ENCODE measurements at regions of chr3 and their contacts with region 1.

Region 1: DNA sequence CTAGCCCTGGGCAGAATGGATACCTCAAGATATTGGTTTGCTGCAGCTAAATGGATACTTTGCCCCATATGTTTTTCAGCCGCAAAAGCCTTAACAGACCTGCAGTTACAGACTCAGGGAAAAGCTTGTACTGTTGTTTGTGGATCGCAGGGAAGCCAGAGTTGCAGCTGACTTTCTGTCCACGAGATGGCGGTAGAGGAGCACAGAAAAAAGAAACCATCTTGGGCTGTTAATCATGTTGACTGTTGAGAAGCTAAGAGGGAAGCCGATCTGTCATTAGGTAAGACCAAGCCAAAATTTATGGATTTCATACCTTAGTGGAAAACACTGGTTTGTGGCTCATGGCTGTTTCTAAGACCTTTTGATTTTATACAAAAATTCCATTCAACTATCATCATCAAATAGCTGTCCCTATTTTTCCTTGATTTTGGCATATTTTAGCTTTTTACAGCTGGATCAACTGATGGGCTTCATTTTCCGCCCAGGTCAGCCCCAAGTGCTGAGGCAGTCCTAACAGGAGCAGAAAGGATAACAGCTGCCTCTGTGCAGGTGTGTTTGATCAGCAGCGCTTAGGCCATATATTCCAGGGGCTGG is 205.7 kb upstream of the ZPLD1 start:
- DNase-seq: peak; percentile 19 to 75
- ATAC-seq: peak; percentile 78 to 88
- H3K4me3 ChIP-seq: no peak overlapping the region
- H3K27ac ChIP-seq: no peak overlapping the region
- H3K4me1 ChIP-seq: peaks cover 8% of the 10 kb centered on the region
- CTCF ChIP-seq: peak; percentile 92
- EP300 ChIP-seq: no peak
- POLR2A ChIP-seq: no peak
- RAD21 ChIP-seq: peak; percentile 94 to 95

Region 2: GRCh38 chr3:101791778-101792177 is 437.4 kb before region 1 on chr3:
- CTCF ChIA-PET with region 1: interaction called, 14 read pairs
- POLR2A ChIA-PET with region 1: no interaction called
- DNase-seq: no peak
- ATAC-seq: no peak
- H3K4me3 ChIP-seq: no peak overlapping the region
- H3K27ac ChIP-seq: no peak overlapping the region
- H3K4me1 ChIP-seq: no peaks in the 10 kb centered on the region
- CTCF ChIP-seq: no peak
- EP300 ChIP-seq: no peak
- POLR2A ChIP-seq: no peak
- RAD21 ChIP-seq: no peak

Region 3: GRCh38 chr3:101819758-101820157 is 409.4 kb before region 1 on chr3:
- CTCF ChIA-PET with region 1: interaction called, 186 read pairs
- POLR2A ChIA-PET with region 1: interaction called, 3 read pairs
- DNase-seq: no peak
- ATAC-seq: no peak
- H3K4me3 ChIP-seq: no peak overlapping the region
- H3K27ac ChIP-seq: no peak overlapping the region
- H3K4me1 ChIP-seq: peaks cover 12% of the 10 kb centered on the region
- CTCF ChIP-seq: no peak
- EP300 ChIP-seq: no peak
- POLR2A ChIP-seq: no peak
- RAD21 ChIP-seq: no peak

Region 4: DNA sequence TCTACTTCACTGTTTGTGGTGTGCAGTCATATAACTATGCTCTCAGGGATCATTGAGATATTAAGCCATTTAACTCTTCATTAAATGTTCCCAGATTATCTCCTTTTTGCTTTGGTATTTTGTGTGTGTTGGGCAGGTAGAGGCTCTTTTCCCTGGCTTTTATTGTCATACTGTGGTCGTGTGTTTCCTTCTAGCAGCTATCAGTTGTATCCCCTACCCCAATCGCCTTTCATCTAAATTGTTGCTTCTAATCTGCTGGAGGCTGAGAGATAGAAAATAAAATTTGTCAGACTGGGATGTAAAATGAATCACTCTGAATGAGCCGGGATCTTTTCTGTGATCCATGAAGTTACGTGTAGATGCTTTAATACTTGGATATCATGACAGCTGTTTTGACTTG is 370.7 kb before region 1 on chr3:
- CTCF ChIA-PET with region 1: interaction called, 17 read pairs
- POLR2A ChIA-PET with region 1: interaction called, 5 read pairs
- DNase-seq: no peak
- ATAC-seq: no peak
- H3K4me3 ChIP-seq: no peak overlapping the region
- H3K27ac ChIP-seq: 0 out of 6 replicates have a peak overlapping the region, but pooled peaks of 1 of the 2 experiments have one; percentile 8
- H3K4me1 ChIP-seq: peaks cover 25% of the 10 kb centered on the region
- CTCF ChIP-seq: no peak
- EP300 ChIP-seq: no peak
- POLR2A ChIP-seq: no peak
- RAD21 ChIP-seq: no peak

Region 5: GRCh38 chr3:102180291-102181039 is 48.7 kb before region 1 on chr3:
- CTCF ChIA-PET with region 1: interaction called, 21 read pairs
- POLR2A ChIA-PET with region 1: no interaction called
- DNase-seq: peak in 1 of 2 experiments; percentile 81
- ATAC-seq: peak; percentile 62 to 74; a peak in 5 of 6 replicates
- H3K4me3 ChIP-seq: peak overlapping the region; percentile 26
- H3K27ac ChIP-seq: peak overlapping the region; percentile 77 to 85
- H3K4me1 ChIP-seq: peaks cover 60% of the 10 kb centered on the region
- CTCF ChIP-seq: no peak
- EP300 ChIP-seq: peak in 1 of 2 experiments; percentile 55; a peak in 1 of 5 replicates
- POLR2A ChIP-seq: no peak
- RAD21 ChIP-seq: no peak

Region 6: GRCh38 chr3:102488331-102488730 is 259.2 kb after region 1 on chr3:
- CTCF ChIA-PET with region 1: no interaction called
- POLR2A ChIA-PET with region 1: no interaction called
- DNase-seq: no peak
- ATAC-seq: no peak
- H3K4me3 ChIP-seq: no peak overlapping the region
- H3K27ac ChIP-seq: no peak overlapping the region
- H3K4me1 ChIP-seq: no peaks in the 10 kb centered on the region
- CTCF ChIP-seq: no peak
- EP300 ChIP-seq: no peak
- POLR2A ChIP-seq: no peak
- RAD21 ChIP-seq: no peak

Region 7: GRCh38 chr3:102673271-102674115 is 444.3 kb after region 1 on chr3:
- CTCF ChIA-PET with region 1: interaction called, 13 read pairs
- POLR2A ChIA-PET with region 1: no interaction called
- DNase-seq: peak; percentile 40 to 53
- ATAC-seq: peak; percentile 88 to 92
- H3K4me3 ChIP-seq: no peak overlapping the region
- H3K27ac ChIP-seq: no peak overlapping the region
- H3K4me1 ChIP-seq: no peaks in the 10 kb centered on the region
- CTCF ChIP-seq: peak; percentile 92
- EP300 ChIP-seq: no peak
- POLR2A ChIP-seq: no peak
- RAD21 ChIP-seq: peak; percentile 91 to 93

Region 8: GRCh38 chr3:102802819-102803420 is 573.8 kb after region 1 on chr3:
- CTCF ChIA-PET with region 1: no interaction called
- POLR2A ChIA-PET with region 1: no interaction called
- DNase-seq: no peak
- ATAC-seq: no peak
- H3K4me3 ChIP-seq: no peak overlapping the region
- H3K27ac ChIP-seq: no peak overlapping the region
- H3K4me1 ChIP-seq: no peaks in the 10 kb centered on the region
- CTCF ChIP-seq: no peak
- EP300 ChIP-seq: no peak
- POLR2A ChIP-seq: no peak
- RAD21 ChIP-seq: no peak

Measured in A549 (cell line).